Naive thymus-derived CD4-positive, alpha-beta T cell (primary cell): ENCODE measurements at regions of chr1 and their contacts with region 1.

Region 1: DNA sequence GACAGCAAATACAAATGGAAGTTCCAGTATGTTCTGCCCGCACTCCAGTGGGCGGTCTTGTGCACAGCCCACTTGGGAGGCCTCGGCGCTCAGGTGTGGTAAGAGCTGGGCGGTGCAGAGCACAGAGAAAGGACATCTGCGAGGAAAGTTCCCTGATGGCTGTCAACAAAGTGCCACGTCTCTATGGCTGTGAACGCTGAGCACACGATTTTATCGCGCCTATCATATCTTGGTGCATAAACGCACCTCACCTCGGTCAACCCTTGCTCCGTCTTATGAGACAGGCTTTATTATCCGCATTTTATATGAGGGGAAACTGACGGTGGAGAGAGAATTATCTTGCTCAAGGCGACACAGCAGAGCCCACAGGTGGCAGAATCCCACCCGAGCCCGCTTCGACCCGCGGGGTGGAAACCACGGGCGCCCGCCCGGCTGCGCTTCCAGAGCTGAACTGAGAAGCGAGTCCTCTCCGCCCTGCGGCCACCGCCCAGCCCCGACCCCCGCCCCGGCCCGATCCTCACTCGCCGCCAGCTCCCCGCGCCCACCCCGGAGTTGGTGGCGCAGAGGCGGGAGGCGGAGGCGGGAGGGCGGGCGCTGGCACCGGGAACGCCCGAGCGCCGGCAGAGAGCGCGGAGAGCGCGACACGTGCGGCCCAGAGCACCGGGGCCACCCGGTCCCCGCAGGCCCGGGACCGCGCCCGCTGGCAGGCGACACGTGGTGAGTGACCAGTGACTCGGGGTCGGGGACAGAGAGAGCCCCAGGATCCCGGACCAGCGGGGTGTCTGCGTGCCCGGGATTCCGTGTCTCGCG is at the start of gene IL12RB2:
- DNase-seq: peak in 7 of 9 donors; percentile 11 to 68 (median 18)
- ATAC-seq: peak; percentile 78
- H3K4me3 ChIP-seq: peak within 1 kb of the TSS; percentile 19
- H3K4me3 Mint-ChIP-seq: peak within 1 kb of the TSS; percentile 76 to 99 (median 84)
- H3K27ac ChIP-seq: no peak within 1 kb of the TSS
- H3K27ac Mint-ChIP-seq: peak within 1 kb of the TSS in 2 of 9 donors; percentile 56 to 99
- H3K4me1 ChIP-seq: peaks cover 0 to 5% of the 10 kb centered on the region in 2 donors
- H3K4me1 Mint-ChIP-seq: peaks cover 0 to 78% (median 9%) of the 10 kb centered on the region in 7 donors
- H3K27me3 ChIP-seq: no peaks in the 10 kb centered on the region
- H3K27me3 Mint-ChIP-seq: peaks cover 0 to 22% (median 10%) of the 10 kb centered on the region in 5 donors
- total RNA-seq, gene IL12RB2: 0.38 to 78.1 (median 1.1) TPM

Region 2: GRCh38 chr1:67194209-67194863 is 113.1 kb before region 1 on chr1:
- CTCF ChIA-PET with region 1: no interaction called
- POLR2A ChIA-PET with region 1: no interaction called
- intact Hi-C with region 1: loop called in 1 of 2 experiments (anchors 1 kb)
- DNase-seq: peak in 4 of 9 donors; percentile 19 to 49 (median 31)
- ATAC-seq: peak; percentile 73
- H3K4me3 ChIP-seq: no peak overlapping the region
- H3K4me3 Mint-ChIP-seq: peak overlapping the region in 2 of 10 donors; percentile 15 to 17
- H3K27ac ChIP-seq: no peak overlapping the region
- H3K27ac Mint-ChIP-seq: peak overlapping the region in 1 of 9 donors; percentile 75
- H3K4me1 ChIP-seq: peaks cover 4 to 20% of the 10 kb centered on the region in 2 donors
- H3K4me1 Mint-ChIP-seq: peaks cover 4 to 30% (median 12%) of the 10 kb centered on the region in 7 donors
- H3K27me3 ChIP-seq: no peaks in the 10 kb centered on the region
- H3K27me3 Mint-ChIP-seq: peaks cover 0 to 3% (median 0%) of the 10 kb centered on the region in 5 donors

Region 3: GRCh38 chr1:67294836-67295617 is 12.4 kb before region 1 on chr1:
- CTCF ChIA-PET with region 1: no interaction called
- POLR2A ChIA-PET with region 1: no interaction called
- intact Hi-C with region 1: loop called in 1 of 2 experiments (anchors 1 kb)
- DNase-seq: no peak
- ATAC-seq: peak; percentile 49
- H3K4me3 ChIP-seq: no peak overlapping the region
- H3K4me3 Mint-ChIP-seq: peak overlapping the region in 1 of 10 donors; percentile 79
- H3K27ac ChIP-seq: no peak overlapping the region
- H3K27ac Mint-ChIP-seq: peak overlapping the region in 1 of 9 donors; percentile 91
- H3K4me1 ChIP-seq: no peaks in the 10 kb centered on the region
- H3K4me1 Mint-ChIP-seq: peaks cover 0 to 59% (median 0%) of the 10 kb centered on the region in 7 donors
- H3K27me3 ChIP-seq: no peaks in the 10 kb centered on the region
- H3K27me3 Mint-ChIP-seq: peaks cover 0 to 28% (median 4%) of the 10 kb centered on the region in 5 donors

Region 4: DNA sequence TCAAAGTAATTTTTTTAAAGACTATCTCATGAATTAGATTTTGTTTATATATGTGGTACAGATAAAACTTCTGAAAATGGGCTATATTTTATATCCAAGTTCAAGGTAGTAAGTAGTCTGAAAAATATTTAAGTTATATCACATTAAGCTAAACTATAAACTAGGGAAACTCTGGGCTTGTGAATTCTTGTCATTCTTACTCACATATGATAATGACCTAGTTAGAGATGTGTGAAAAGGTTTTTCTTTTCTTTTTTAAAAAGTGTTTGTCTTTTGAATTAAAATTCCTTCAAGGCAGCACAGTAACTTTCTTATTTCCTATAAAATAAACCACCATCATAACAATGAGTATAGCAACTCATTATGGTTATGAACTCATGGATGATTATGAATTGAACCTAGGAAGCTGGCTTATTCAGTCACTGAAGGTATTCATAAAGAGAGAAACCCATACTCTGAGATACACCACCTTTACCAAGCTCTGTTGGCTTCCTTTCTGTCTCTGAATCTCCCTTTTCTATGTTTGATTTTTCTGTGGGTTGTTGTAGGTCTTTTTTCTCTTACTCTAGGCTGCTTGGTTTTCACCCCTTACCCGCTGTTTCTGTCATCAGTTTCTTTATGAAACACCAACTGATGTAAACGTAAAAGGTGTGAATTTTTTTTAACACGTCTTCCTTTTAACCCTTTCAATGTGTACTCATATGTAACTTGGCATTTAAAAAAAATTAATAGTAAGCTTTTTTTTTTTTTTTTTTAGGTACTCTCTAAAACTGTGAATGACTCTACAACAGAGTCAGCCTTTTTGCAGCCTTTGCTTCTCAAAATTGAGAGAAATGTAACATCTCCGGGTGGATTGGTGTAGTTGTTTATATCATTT is 25.4 kb after region 1 on chr1:
- CTCF ChIA-PET with region 1: no interaction called
- POLR2A ChIA-PET with region 1: interaction called, 3 read pairs
- intact Hi-C with region 1: loop called in 1 of 2 experiments (anchors 1 kb)
- DNase-seq: peak in 5 of 9 donors; percentile 16 to 41 (median 33)
- ATAC-seq: peak; percentile 84
- H3K4me3 ChIP-seq: no peak overlapping the region
- H3K4me3 Mint-ChIP-seq: peak overlapping the region in 6 of 10 donors; percentile 0 to 51 (median 24)
- H3K27ac ChIP-seq: no peak overlapping the region
- H3K27ac Mint-ChIP-seq: peak overlapping the region; percentile 3 to 87 (median 23)
- H3K4me1 ChIP-seq: peaks cover 17 to 34% of the 10 kb centered on the region in 2 donors
- H3K4me1 Mint-ChIP-seq: peaks cover 19 to 73% (median 39%) of the 10 kb centered on the region in 7 donors
- H3K27me3 ChIP-seq: no peaks in the 10 kb centered on the region
- H3K27me3 Mint-ChIP-seq: no peaks in the 10 kb centered on the region